ENCODE measurements at regions of chr2 and their contacts with region 1.

Region 1: GRCh38 chr2:47767880-47768609 is 14.9 kb upstream of the MSH6 start:
- DNase-seq: peak; percentile 79
- CTCF ChIP-seq: peak; percentile 98

Region 2: DNA sequence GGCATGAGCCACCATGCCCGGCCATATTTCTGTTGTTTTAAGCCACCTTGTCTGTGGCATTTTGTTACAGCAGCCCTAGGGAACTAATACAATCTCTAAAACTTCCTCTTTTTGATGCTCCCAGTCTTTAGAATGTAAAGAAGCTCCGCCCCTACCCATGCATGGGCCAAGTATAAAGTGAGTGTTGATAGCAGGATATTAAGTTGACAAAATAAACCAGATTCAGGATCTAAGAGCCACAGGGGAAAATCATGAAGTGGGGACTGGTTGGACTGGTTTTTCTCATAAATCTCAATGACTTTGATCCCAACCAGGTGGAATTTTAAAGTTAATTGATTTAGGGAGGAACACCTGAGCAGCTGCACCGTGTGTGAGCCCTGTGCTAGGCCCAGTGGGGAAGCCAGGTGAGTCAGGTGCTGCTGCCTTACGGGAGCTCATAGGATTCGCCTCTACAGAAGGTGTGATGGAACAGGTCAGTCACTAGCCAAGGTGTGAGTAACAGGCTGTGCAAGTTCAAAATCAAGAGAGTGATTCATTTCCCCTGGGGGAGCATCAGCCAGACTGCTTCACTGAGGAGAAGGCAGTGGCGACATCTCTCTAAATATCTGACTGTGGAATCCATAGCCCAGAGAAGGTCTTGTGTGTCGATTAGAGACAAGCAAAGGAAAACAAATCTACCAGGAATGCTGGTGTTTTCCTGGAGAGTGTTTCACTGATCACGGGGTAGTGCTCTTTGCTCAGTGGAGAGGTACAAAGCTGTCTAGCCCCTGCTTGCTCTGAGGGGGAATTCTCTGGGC is 428.1 kb before region 1 on chr2:
- CTCF ChIA-PET with region 1: interaction called, 89 read pairs
- POLR2A ChIA-PET with region 1: no interaction called
- DNase-seq: no peak
- CTCF ChIP-seq: no peak

Region 3: GRCh38 chr2:47520825-47521665 is 247.0 kb before region 1 on chr2:
- CTCF ChIA-PET with region 1: interaction called, 16 read pairs
- POLR2A ChIA-PET with region 1: no interaction called
- DNase-seq: peak; percentile 83
- CTCF ChIP-seq: peak; percentile 51

Region 4: GRCh38 chr2:47631792-47632398 is 136.2 kb before region 1 on chr2:
- CTCF ChIA-PET with region 1: no interaction called
- POLR2A ChIA-PET with region 1: no interaction called
- DNase-seq: no peak
- CTCF ChIP-seq: no peak

Region 5: DNA sequence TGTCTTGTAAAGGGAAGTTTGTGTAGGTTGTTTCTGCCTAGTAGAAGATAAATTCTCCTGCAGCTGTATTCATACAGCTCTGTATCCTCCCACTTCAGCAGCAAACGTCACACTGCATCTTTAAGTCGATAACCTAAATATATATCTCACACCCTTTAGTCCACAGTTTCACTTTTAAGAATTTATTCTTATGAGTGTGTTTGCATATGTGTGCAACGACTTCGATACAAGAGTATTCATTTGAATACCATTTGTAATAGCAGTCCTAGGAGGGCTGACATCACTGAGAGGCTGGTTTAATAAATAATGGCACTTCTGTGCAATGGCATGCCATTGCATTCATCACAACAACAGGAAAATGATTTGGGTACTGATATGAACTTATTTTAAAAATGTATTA is 48.9 kb before region 1 on chr2:
- CTCF ChIA-PET with region 1: interaction called, 16 read pairs
- POLR2A ChIA-PET with region 1: no interaction called
- DNase-seq: peak; percentile 53
- CTCF ChIP-seq: no peak

Region 6: DNA sequence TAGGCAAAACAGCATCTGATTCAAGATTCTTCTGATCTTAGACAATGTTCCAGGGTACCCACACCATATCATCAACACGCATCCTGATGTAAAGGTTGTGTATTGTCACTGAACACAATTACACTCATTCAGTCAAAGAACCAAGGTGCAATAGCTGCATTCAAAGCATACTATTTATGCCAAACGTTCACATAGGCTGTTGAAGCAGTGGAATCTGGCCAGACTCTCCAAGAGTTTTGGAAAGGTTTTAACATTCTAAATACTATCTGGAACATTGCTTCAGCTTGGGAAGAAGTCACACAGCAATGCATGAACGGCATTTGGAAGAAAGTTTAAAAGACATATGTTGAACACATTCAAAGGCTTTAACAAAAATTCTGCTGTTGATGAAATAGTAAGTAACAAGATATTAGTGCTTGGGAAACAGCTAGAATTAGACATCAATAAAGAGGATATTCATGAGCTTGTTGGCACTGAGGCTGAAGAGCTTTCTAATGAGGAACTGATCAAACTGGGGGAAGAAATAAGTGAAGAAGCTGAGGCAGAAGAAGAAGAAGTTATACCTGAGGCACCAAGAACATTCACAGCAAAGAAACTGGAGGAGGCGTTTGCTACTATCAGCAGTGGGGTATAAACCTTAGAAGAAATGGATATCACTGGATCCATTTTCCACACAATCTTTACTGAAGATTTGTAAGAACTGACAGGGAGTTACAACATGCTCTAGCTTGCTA is 32.7 kb before region 1 on chr2:
- CTCF ChIA-PET with region 1: interaction called, 14 read pairs
- POLR2A ChIA-PET with region 1: no interaction called
- DNase-seq: no peak
- CTCF ChIP-seq: no peak

Region 7: GRCh38 chr2:47751875-47752357 is 16.1 kb before region 1 on chr2:
- CTCF ChIA-PET with region 1: interaction called, 21 read pairs
- POLR2A ChIA-PET with region 1: interaction called, 4 read pairs
- DNase-seq: no peak
- CTCF ChIP-seq: no peak

Region 8: DNA sequence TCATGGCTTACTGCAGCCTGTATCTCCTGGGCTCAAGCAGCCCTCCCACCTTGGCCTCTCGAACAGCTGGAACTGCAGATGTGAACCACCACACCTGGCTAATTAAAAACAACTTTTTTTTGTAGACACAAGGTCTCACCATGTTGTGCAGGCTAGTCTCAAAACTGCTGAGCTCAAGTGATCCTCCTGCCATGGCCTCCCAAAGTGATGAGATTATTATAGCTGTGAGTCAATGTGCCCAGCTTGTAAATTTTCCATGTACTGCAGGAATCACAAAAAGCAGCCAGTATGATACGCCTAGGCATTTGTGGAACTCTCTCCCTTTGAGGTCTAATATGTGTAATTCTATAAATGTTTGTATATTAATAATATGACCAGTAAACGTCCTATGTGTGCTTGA is 74.8 kb after region 1 on chr2:
- CTCF ChIA-PET with region 1: no interaction called
- POLR2A ChIA-PET with region 1: no interaction called
- DNase-seq: no peak
- CTCF ChIP-seq: no peak

Region 9: GRCh38 chr2:48059977-48060376 is 291.9 kb after region 1 on chr2:
- CTCF ChIA-PET with region 1: no interaction called
- POLR2A ChIA-PET with region 1: no interaction called
- DNase-seq: no peak
- CTCF ChIP-seq: no peak

Region 10: GRCh38 chr2:48114256-48114655 is 346.2 kb after region 1 on chr2:
- CTCF ChIA-PET with region 1: no interaction called
- POLR2A ChIA-PET with region 1: no interaction called
- DNase-seq: peak; percentile 35
- CTCF ChIP-seq: no peak